Brain microvascular endothelial cell (primary cell): ENCODE measurements at regions of chr9 and their contacts with region 1.

Region 1: DNA sequence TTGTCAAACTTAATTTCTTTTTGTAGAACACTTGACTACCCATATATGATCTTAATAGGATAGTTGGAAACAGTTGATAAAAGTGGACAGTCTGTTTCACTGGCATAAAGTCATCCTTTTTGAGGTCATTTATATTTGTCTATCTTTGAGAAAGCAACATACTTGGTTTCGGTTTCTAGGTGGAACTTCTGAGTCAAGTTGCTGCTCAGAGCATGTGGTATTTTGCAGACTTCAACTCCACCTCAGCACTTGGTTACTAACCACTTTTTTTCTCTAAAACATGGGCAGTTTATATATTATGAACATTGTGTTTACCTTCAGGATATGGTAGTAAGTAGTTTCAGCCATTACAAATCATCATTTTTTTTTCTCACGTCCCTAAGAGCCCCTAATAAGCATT is 1749.0 kb upstream of the C9orf72 start:
- DNase-seq: no peak
- H3K4me3 ChIP-seq: no peak overlapping the region
- H3K27ac ChIP-seq: no peak overlapping the region
- H3K27me3 ChIP-seq: no peaks in the 10 kb centered on the region
- CTCF ChIP-seq: no peak

Region 2: DNA sequence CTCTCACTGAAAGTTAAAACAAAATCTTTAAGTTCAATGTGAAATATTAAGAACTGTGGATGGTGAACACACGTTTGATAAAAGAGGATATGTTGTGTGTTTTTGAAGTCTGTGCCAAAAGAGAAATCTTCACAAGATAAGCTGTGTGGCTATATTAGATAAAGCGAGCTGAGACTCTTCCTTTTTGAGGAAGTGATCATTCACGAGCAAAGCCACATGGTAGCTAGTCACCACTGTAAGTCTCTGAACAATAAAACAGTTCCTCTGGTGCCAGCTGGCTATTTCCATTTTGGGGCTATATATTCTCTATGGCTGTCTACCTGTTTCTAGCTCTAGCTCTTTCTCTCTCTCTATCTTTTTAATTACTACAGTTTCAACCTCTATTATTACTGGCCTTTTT is 100.2 kb after region 1 on chr9:
- in situ Hi-C with region 1: loop called (anchors 25 kb)
- DNase-seq: no peak
- H3K4me3 ChIP-seq: no peak overlapping the region
- H3K27ac ChIP-seq: no peak overlapping the region
- H3K27me3 ChIP-seq: no peaks in the 10 kb centered on the region
- CTCF ChIP-seq: no peak

Region 3: DNA sequence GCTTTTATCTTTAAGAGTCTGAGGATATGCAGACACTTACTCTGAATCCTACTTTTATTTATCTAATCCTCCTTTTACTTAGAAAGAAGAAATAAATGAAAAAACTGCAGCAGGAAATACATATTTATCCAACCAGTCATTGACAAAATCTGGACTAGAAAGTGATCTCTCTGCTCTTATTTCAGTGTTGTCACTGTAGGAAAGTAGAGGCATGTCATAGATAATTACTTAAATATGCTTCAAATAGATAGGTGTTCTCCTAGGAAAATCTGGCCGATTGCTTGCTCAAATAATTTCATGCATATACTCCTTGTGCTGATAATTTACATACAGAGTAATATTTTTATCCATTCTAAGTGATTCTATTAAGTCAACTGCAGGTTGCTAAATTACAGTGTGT is 253.0 kb after region 1 on chr9:
- in situ Hi-C with region 1: no loop called
- DNase-seq: no peak
- H3K4me3 ChIP-seq: no peak overlapping the region
- H3K27ac ChIP-seq: no peak overlapping the region
- H3K27me3 ChIP-seq: no peaks in the 10 kb centered on the region
- CTCF ChIP-seq: no peak

Region 4: DNA sequence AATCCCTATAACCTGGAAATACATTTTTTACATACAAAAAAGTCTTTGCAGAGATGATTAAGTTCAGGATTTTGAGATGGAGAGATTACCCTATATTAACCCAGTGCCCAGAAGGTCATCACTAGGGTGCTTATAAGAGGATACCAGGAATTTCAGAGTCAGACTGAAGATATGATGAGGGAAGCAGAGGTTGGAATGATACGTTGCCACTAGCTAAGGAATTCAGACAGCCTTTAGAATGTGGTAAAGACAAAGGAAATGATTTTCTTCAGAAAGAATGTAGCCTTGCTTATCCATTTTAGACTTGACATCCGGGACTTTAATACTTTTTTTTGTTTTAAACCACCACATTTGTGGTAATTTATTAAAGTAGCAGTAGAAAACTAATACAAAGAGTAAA is 427.8 kb after region 1 on chr9:
- in situ Hi-C with region 1: no loop called
- DNase-seq: peak; percentile 4
- H3K4me3 ChIP-seq: no peak overlapping the region
- H3K27ac ChIP-seq: no peak overlapping the region
- H3K27me3 ChIP-seq: no peaks in the 10 kb centered on the region
- CTCF ChIP-seq: no peak